Right lobe of liver (tissue), 6 donors: ENCODE measurements at regions of chr9 and their contacts with region 1.

Region 1: DNA sequence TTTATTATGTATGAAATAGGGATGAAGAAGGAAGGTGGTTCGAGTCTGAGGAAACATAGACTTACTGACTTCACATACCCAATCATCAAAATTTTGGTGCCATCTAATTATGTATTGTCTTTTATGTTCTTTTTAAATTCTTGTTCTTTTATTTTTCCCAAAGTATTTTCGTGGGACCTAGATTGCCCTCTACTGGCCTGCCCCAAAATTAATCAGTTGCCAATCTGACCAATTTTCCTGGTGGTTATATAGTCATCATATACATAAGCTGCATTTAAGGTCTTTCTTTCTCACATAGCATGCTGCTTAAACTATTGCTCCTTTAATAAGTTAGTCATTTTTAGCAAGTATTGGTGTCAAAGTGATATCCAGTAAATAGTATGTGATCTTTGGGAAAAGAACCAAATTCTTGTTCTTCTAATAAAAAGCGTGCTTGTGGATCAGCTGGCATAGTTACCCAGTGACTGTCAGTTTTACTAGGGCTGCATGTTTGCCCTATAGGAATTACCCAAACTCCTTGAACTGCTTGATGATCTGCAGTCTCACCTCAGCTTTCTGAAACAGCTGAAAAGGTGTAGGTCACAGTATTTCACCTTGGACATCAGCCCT is 223.5 kb downstream of the SH3GL2 start:
- DNase-seq: no peak
- ATAC-seq: peak in 3 of 4 donors; percentile 37 to 50 (median 46)
- H3K4me3 ChIP-seq: no peak overlapping the region
- H3K27ac ChIP-seq: no peak overlapping the region
- H3K4me1 ChIP-seq: no peaks in the 10 kb centered on the region
- H3K27me3 ChIP-seq: no peaks in the 10 kb centered on the region
- CTCF ChIP-seq: peak; percentile 47 to 64 (median 57)
- POLR2A ChIP-seq: no peak

Region 2: DNA sequence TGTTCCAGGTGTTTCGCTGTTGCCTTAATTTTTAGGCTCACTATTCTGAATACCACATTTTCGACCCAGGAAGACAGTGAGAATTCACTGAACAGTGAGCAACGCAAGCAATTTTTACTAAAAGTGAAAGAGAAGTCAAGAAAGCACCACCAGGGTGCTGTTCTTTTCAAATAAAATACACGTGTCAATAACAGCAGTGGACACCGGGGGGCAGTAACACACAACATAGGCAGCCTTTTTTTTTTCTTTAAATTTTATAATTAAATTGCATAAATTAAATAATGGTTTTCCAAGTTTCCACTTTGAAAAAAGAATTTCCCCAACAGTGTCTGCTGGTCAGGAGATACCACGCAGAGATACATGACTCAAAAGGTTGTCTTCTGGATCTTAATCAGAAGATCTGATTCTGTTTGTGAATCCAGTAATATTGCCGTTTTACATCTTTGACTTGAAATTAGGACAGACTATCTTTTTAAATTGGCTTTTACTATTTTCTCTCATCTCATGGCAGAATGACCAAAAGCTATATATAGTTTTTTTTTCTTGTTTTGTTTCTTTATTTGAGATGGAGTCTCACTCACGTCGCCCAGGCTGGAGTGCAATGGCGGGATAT is 270.6 kb before region 1 on chr9:
- intact Hi-C with region 1: loop called in 1 of 2 experiments (anchors 10 kb)
- DNase-seq: no peak
- ATAC-seq: peak; percentile 64 to 78 (median 73)
- H3K4me3 ChIP-seq: no peak overlapping the region
- H3K27ac ChIP-seq: no peak overlapping the region
- H3K4me1 ChIP-seq: no peaks in the 10 kb centered on the region
- H3K27me3 ChIP-seq: no peaks in the 10 kb centered on the region
- CTCF ChIP-seq: peak; percentile 64 to 71 (median 70)
- POLR2A ChIP-seq: no peak

Region 3: DNA sequence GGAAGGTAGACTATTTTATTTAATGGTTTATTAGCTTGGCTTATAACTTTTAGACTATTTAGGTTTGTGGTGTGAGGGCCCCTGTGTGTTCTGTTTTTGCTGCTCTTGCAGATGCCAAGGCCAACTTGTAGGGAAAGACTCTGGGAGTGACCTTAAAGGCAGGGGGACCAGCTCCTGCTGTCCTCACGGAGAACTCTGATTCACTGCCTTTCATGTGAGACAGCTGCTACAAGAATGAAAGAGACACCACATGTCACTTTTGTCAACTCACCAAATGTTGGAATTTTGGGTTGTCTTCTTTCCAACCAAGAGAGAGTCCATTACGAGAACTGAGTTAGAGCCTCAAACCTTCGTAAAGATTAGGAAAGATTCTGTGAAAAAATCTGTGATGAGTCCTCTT is 413.3 kb after region 1 on chr9:
- intact Hi-C with region 1: loop called in 1 of 2 experiments (anchors 10 kb)
- DNase-seq: no peak
- ATAC-seq: no peak
- H3K4me3 ChIP-seq: no peak overlapping the region
- H3K27ac ChIP-seq: no peak overlapping the region
- H3K4me1 ChIP-seq: no peaks in the 10 kb centered on the region
- H3K27me3 ChIP-seq: no peaks in the 10 kb centered on the region
- CTCF ChIP-seq: no peak
- POLR2A ChIP-seq: no peak